ENCODE measurements at regions of chr14 and their contacts with region 1.

Region 1: GRCh38 chr14:69107407-69108003 is 45.4 kb downstream of the DCAF5 start:
- DNase-seq: peak; percentile 38
- CTCF ChIP-seq: peak; percentile 37

Region 2: GRCh38 chr14:68862954-68863594 is 244.4 kb before region 1 on chr14:
- CTCF ChIA-PET with region 1: interaction called, 35 read pairs
- POLR2A ChIA-PET with region 1: no interaction called
- DNase-seq: peak; percentile 75
- CTCF ChIP-seq: peak; percentile 70

Region 3: DNA sequence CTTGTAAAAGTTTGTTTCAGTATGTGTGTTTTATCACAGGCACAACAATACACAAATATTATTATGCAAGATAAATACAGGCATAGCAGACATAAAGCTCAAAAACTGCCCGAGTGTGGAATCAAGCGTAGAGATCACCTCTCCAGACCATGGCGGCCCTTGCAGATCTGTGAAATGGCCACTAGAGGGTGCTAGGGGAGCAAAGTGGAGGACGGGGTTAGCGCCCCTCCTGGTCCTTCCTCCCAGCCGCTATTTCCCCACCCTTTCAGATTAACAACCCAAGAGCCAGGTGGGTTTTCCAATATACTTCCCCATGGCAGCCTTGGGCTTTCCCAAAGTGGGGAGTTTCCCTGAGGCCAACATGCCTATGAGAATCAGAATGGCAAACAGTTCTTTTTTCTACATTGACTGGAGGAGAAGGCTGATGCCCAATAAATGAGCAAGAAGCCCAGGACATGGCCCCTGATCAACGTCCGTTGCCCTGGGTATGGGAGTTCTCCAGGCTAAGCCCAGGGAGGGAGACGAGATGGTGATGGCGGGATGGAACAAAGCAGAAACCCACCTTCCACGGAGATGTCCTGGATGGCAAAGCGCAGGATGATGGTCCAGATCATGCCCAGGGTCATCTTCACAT is 195.8 kb before region 1 on chr14:
- CTCF ChIA-PET with region 1: interaction called, 32 read pairs
- POLR2A ChIA-PET with region 1: no interaction called
- DNase-seq: peak; percentile 86
- CTCF ChIP-seq: peak; percentile 81

Region 4: DNA sequence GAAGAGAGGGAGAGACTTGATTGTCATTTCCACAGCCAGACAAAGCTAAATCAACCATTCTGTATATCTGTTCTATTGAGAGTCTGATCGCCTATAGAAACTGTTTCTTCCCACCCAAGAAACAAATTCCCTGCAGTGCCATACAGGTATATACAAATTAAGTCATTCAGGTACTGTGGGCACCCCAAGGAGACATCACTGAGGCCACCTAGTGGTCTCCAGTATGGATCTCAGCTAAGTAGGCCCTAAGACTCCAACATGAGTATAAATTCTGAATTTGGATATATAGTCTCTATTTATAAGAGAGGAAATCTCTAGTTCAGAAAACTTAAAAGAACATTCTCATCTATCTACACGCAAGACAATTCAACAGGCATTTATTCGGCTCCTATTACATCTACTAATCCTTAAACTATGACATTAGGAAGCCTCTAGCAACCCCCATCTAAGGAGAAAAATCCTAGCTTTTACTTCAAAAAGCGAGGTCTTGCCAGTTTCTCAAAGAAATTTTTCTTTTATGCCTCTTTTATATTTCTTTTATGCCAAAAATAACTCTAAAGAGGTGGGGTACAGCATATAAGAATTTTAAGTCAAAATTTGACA is 17.2 kb before region 1 on chr14:
- CTCF ChIA-PET with region 1: interaction called, 10 read pairs
- POLR2A ChIA-PET with region 1: no interaction called
- DNase-seq: no peak
- CTCF ChIP-seq: peak; percentile 55